Calu3 (cell line): ENCODE measurements at regions of chr6 and their contacts with region 1.

Region 1: GRCh38 chr6:136792410-136793262 is at the start of gene MAP3K5:
- DNase-seq: peak; percentile 93
- H3K4me3 Mint-ChIP-seq: peak within 1 kb of the TSS; percentile 97
- H3K27ac Mint-ChIP-seq: peak within 1 kb of the TSS; percentile 78
- H3K4me1 Mint-ChIP-seq: no peaks in the 10 kb centered on the region
- H3K27me3 Mint-ChIP-seq: no peaks in the 10 kb centered on the region
- CTCF ChIP-seq: peak; percentile 67
- total RNA-seq, gene MAP3K5: 15.3 and 15.8 TPM in 2 replicates

Region 2: DNA sequence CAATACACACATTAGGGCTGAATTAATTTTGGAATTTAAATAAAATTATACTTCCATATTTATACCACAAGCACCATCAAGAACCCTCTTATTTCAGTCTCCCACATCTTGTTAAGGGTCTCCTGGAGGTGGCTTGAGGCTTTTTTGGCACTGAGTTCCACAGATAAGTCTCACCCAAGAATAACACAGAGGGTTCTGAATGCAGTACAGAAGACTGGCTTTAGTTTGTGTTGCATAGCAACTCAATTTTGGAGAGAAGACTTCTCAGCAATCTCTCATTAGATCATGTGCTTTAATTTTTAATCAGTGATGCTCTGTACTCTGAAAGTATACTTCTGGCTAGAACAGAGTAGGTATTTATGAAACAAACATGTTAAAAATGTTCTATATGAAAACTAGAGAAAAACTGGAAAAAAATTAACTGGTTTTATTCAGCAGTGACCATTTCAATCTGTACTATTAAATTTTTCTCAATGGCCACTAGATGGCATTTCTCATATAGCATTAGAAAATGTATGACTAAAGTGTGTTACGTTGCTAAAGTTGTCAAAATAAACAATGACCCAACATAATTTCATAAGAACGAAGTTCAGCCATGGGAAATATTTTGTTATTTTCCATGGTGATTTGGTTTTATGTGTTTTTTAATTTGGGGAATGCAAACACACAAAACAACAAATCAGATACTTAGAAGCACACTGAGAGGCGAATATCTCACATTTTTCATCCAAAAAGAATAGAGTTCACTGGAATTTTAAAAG is 209.7 kb before region 1 on chr6:
- CTCF ChIA-PET with region 1: no interaction called
- intact Hi-C with region 1: loop called (anchors 2 kb)
- DNase-seq: no peak
- H3K4me3 Mint-ChIP-seq: no peak overlapping the region
- H3K27ac Mint-ChIP-seq: peak overlapping the region; percentile 66
- H3K4me1 Mint-ChIP-seq: no peaks in the 10 kb centered on the region
- H3K27me3 Mint-ChIP-seq: no peaks in the 10 kb centered on the region
- CTCF ChIP-seq: no peak

Region 3: DNA sequence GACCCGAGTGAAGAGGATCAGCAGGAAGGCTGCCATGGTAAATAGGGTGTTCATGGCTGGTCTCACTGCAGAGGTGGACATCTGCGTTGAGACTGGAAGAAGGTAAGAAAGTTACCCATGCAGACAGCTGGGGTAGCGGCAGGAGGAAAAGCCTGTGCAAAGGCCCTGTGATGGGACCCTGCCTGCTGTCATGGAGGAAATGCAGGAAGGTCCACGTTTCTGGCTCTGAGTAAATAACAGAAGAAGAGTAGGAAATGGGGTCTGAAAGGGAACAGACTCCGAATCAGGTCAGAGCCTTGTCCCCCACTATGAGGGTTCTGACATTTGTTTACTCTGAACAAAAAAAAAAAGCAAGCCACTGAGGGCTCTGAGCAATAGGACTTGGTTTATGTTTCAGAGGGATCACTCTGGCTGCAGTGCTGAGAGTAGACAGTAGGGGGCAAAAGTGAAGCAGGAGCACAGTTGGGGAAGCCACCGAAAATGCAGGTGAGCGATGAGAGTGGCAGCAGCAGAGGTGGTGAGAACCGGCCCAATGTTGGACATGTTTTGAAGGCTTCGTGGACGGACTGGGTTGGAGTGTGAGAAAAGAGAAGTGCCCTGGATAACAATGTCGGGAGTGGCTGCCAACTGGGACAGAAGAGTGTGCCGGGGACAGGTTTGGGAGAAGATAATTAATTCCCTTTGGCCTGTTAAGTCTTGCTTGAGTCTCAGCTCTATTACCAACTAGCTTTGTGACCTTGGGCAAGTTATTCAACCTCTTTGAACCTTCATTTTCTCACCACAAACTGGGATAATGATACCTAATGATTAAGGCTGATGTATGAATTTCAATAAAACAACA is 184.5 kb before region 1 on chr6:
- CTCF ChIA-PET with region 1: interaction called, 16 read pairs
- intact Hi-C with region 1: no loop called
- DNase-seq: peak; percentile 81
- H3K4me3 Mint-ChIP-seq: peak overlapping the region; percentile 42
- H3K27ac Mint-ChIP-seq: peak overlapping the region; percentile 82
- H3K4me1 Mint-ChIP-seq: peaks cover 37% of the 10 kb centered on the region
- H3K27me3 Mint-ChIP-seq: no peaks in the 10 kb centered on the region
- CTCF ChIP-seq: peak; percentile 60

Region 4: GRCh38 chr6:136643850-136644596 is 148.6 kb before region 1 on chr6:
- CTCF ChIA-PET with region 1: interaction called, 132 read pairs
- intact Hi-C with region 1: loop called (anchors 1 kb)
- DNase-seq: peak; percentile 85
- H3K4me3 Mint-ChIP-seq: no peak overlapping the region
- H3K27ac Mint-ChIP-seq: no peak overlapping the region
- H3K4me1 Mint-ChIP-seq: peaks cover 13% of the 10 kb centered on the region
- H3K27me3 Mint-ChIP-seq: no peaks in the 10 kb centered on the region
- CTCF ChIP-seq: peak; percentile 70

Region 5: DNA sequence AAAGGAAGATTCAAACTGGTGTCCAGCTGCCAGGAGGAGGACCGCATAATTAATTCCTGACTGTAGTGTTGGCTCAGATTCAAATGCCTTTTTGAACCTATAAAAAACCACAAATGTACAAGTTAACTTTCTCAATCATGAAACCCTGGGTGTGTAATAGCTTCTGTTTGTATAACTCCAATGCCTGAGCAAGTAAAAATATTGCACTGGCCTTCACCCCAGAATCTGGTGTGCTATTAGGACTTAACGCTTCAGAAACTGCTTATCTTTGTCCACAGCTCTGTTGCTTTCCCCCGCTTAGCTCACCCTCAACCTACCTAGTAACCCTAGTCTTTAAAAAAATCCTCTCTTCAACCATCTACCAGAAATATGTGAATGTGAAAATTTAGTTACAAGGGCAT is 123.3 kb before region 1 on chr6:
- CTCF ChIA-PET with region 1: interaction called, 10 read pairs
- intact Hi-C with region 1: no loop called
- DNase-seq: peak; percentile 11
- H3K4me3 Mint-ChIP-seq: peak overlapping the region; percentile 36
- H3K27ac Mint-ChIP-seq: peak overlapping the region; percentile 58
- H3K4me1 Mint-ChIP-seq: peaks cover 8% of the 10 kb centered on the region
- H3K27me3 Mint-ChIP-seq: no peaks in the 10 kb centered on the region
- CTCF ChIP-seq: no peak

Region 6: GRCh38 chr6:136723780-136724179 is 68.9 kb before region 1 on chr6:
- CTCF ChIA-PET with region 1: interaction called, 10 read pairs
- intact Hi-C with region 1: no loop called
- DNase-seq: peak; percentile 28
- H3K4me3 Mint-ChIP-seq: no peak overlapping the region
- H3K27ac Mint-ChIP-seq: no peak overlapping the region
- H3K4me1 Mint-ChIP-seq: peaks cover 24% of the 10 kb centered on the region
- H3K27me3 Mint-ChIP-seq: no peaks in the 10 kb centered on the region
- CTCF ChIP-seq: no peak

Region 7: DNA sequence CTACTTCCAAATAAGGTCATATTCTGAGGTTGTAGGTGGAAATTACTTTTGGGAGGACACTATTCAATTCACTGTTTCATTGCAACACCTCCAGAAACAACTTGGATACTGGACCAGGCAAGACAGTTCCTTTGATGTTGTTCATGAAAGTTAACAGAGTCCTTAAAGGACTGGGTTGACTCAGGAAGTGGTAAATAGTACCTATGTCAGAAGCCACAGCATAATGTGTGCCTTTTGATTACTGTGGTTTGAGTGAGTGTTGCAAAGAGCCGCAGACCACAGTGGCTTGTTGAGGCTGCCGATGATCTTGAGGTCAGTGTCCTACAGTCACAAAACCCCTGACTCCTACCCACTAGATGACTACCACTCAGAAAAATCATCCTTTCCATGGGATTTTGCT is 241.2 kb after region 1 on chr6:
- CTCF ChIA-PET with region 1: no interaction called
- intact Hi-C with region 1: no loop called
- DNase-seq: no peak
- H3K4me3 Mint-ChIP-seq: no peak overlapping the region
- H3K27ac Mint-ChIP-seq: no peak overlapping the region
- H3K4me1 Mint-ChIP-seq: peaks cover 19% of the 10 kb centered on the region
- H3K27me3 Mint-ChIP-seq: no peaks in the 10 kb centered on the region
- CTCF ChIP-seq: no peak